Activated CD8-positive, alpha-beta T cell treated with anti-CD3 and anti-CD28 coated beads for 36 hours (primary cell): ENCODE measurements at regions of chr9 and their contacts with region 1.

Region 1: GRCh38 chr9:84061594-84062193 is 81.1 kb downstream of the RMI1 start:
- DNase-seq: no peak
- ATAC-seq: no peak
- H3K4me3 Mint-ChIP-seq: no peak overlapping the region
- H3K27ac Mint-ChIP-seq: no peak overlapping the region
- H3K4me1 Mint-ChIP-seq: no peaks in the 10 kb centered on the region
- H3K27me3 Mint-ChIP-seq: peaks cover 2% of the 10 kb centered on the region
- CTCF ChIP-seq: no peak

Region 2: GRCh38 chr9:84179531-84179930 is 117.8 kb after region 1 on chr9:
- CTCF ChIA-PET with region 1: no interaction called
- POLR2A ChIA-PET with region 1: no interaction called
- intact Hi-C with region 1: no loop called
- DNase-seq: no peak
- ATAC-seq: no peak
- H3K4me3 Mint-ChIP-seq: no peak overlapping the region
- H3K27ac Mint-ChIP-seq: no peak overlapping the region
- H3K4me1 Mint-ChIP-seq: no peaks in the 10 kb centered on the region
- H3K27me3 Mint-ChIP-seq: peaks cover 6% of the 10 kb centered on the region
- CTCF ChIP-seq: no peak

Region 3: DNA sequence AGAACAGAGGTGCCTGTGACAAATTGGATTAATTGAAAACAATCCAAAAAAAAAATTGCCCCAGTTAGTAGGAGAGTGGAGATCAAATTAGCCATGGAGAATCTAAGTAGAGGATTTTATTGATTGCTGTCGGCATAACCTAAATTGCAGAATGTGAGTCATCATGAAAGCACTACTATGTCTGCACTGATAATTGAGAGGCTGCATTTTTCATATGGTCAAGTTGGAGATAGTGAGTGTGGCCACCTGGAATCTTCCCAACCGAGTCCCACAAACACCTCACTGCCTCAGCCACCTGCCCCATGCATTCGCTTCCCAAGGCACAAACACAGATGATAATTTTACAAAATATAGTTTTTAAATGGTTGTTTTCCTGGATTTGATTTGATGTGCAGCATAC is 731.6 kb after region 1 on chr9:
- CTCF ChIA-PET with region 1: no interaction called
- POLR2A ChIA-PET with region 1: no interaction called
- intact Hi-C with region 1: loop called (anchors 10 kb)
- DNase-seq: no peak
- ATAC-seq: no peak
- H3K4me3 Mint-ChIP-seq: no peak overlapping the region
- H3K27ac Mint-ChIP-seq: no peak overlapping the region
- H3K4me1 Mint-ChIP-seq: no peaks in the 10 kb centered on the region
- H3K27me3 Mint-ChIP-seq: peaks cover 2% of the 10 kb centered on the region
- CTCF ChIP-seq: no peak